ENCODE measurements at regions of chrX and their contacts with region 1.

Region 1: GRCh38 chrX:7996414-7996813 is 69.2 kb upstream of the PNPLA4 start:
- DNase-seq: no peak

Region 2: DNA sequence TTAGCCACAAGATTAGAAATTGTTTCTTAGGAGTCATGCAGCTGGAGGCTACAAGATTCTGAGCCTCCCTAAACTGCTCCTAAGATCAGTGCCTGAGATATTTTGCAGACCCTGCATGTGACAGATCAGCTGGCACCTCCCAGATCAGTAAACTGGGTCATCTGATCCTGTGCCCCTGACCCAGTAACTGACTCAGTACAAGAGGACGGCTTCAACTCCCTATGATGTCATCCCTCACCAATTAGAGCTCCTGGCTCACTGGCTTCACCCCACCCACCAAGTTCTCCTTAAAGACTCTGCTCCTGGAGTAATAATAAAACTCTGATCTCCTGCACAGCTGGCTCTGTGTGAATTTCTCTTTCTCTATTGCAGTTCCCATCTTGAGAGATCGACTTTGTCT is 23.8 kb before region 1 on chrX:
- intact Hi-C with region 1: no loop called
- DNase-seq: no peak

Region 3: GRCh38 chrX:8738588-8739189 is 742.3 kb after region 1 on chrX:
- intact Hi-C with region 1: loop called in 1 of 2 experiments (anchors 2 kb)
- DNase-seq: no peak

Region 4: DNA sequence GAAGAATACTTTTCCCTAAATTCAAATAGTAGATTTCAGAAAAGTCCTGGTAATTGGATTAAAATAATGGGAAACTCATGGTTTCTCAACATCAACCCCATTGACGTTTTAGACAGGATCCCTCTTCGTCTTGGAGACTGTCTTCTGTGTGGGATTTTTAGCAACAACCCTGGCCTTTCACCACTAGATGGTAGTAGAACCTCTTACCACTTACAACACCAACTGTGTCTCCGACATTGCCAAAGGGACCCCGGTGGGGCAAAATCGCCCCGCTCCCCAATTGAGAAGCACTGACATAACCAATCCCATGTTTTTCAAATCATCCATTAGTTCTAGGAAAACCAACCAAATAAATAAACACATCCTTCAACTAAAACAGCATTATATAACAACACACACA is 752.4 kb after region 1 on chrX:
- intact Hi-C with region 1: loop called in 1 of 2 experiments (anchors 5 kb)
- DNase-seq: no peak

Region 5: DNA sequence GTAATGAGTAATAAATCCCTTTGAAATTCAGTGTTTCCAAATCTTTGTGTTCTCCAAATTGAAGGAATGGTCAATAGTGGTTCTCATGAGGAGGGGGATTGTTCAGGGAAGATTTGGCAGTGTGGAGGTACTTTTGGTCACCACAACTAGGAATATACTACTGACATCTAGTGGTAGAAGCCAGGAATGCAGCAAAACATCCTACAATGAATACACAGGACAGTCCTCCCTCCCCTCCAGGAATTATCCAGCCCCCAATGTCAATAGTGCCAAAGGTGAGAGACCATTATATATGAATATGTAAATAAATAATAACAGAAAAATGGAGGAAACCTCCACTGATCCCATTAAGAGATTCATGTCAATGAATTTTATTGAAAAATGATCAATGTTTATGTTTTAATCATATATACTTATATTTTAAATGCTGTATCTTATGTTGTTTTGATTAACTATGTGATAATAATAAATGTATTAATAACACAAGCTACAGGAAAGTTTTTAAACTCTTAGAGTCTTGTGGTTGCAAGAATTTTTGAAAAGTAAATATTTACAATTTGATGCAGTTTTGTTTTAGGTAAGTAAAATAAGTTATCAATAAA is 819.2 kb after region 1 on chrX:
- intact Hi-C with region 1: loop called in 1 of 2 experiments (anchors 10 kb)
- DNase-seq: no peak